ENCODE measurements at regions of chr22 and their contacts with region 1.

Region 1: DNA sequence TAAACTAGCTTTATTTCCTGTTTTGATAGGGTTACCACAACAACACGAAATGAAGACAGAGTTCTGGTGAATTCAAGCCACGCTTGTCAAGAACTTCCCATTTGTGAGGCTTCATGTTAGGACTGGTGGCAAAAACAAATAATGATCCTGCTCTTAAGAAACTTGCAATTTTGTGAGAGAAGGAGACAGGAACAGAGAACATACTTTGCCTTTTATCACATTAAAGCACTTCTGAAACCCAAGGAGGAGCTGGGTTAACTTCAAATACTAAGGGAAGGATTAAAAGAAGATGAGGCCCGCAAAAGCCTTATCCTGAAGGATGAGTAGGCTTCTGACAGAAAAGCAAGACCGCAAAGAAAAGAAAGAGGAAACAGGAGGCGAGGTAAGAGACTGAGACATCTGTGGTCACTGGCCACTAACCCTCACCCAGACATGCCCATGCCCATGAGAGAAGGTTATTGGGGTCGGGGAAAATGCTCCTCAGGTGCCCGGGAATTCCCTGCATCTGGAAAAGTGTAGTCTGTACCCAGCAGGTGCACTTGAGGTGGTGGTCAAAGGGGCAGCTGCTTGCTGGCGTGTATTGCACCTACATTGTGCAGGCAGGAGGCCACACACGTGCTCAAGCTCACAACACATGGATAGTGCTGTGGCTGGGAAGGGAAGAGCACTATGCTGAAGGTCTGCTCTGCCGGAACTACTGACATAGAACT is 50.5 kb downstream of the MAPK1 start:
- DNase-seq: peak in 9 of 14 experiments; percentile 7 to 90 (median 24)
- ATAC-seq: peak; percentile 92
- H3K4me3 ChIP-seq: peak overlapping the region; percentile 8
- H3K4me3 Mint-ChIP-seq: peak overlapping the region; percentile 69
- H3K27ac ChIP-seq: peak overlapping the region; percentile 58 to 92
- H3K27ac Mint-ChIP-seq: peak overlapping the region; percentile 89
- H3K4me1 ChIP-seq: peaks cover 48% of the 10 kb centered on the region
- H3K4me1 Mint-ChIP-seq: peaks cover 68% of the 10 kb centered on the region
- H3K27me3 ChIP-seq: no peaks in the 10 kb centered on the region
- H3K27me3 Mint-ChIP-seq: no peaks in the 10 kb centered on the region
- CTCF ChIP-seq: no peak

Region 2: GRCh38 chr22:21754523-21754922 is 62.4 kb before region 1 on chr22:
- CTCF ChIA-PET with region 1: no interaction called
- POLR2A ChIA-PET with region 1: no interaction called
- intact Hi-C with region 1: no loop called
- DNase-seq: no peak
- ATAC-seq: no peak
- H3K4me3 ChIP-seq: no peak overlapping the region
- H3K4me3 Mint-ChIP-seq: no peak overlapping the region
- H3K27ac ChIP-seq: no peak overlapping the region
- H3K27ac Mint-ChIP-seq: no peak overlapping the region
- H3K4me1 ChIP-seq: no peaks in the 10 kb centered on the region
- H3K4me1 Mint-ChIP-seq: no peaks in the 10 kb centered on the region
- H3K27me3 ChIP-seq: no peaks in the 10 kb centered on the region
- H3K27me3 Mint-ChIP-seq: no peaks in the 10 kb centered on the region
- CTCF ChIP-seq: no peak

Region 3: GRCh38 chr22:21778705-21779363 is 38.1 kb before region 1 on chr22:
- CTCF ChIA-PET with region 1: no interaction called
- POLR2A ChIA-PET with region 1: no interaction called
- intact Hi-C with region 1: no loop called
- DNase-seq: no peak
- ATAC-seq: no peak
- H3K4me3 ChIP-seq: no peak overlapping the region
- H3K4me3 Mint-ChIP-seq: no peak overlapping the region
- H3K27ac ChIP-seq: no peak overlapping the region
- H3K27ac Mint-ChIP-seq: no peak overlapping the region
- H3K4me1 ChIP-seq: no peaks in the 10 kb centered on the region
- H3K4me1 Mint-ChIP-seq: no peaks in the 10 kb centered on the region
- H3K27me3 ChIP-seq: no peaks in the 10 kb centered on the region
- H3K27me3 Mint-ChIP-seq: no peaks in the 10 kb centered on the region
- CTCF ChIP-seq: no peak

Region 4: DNA sequence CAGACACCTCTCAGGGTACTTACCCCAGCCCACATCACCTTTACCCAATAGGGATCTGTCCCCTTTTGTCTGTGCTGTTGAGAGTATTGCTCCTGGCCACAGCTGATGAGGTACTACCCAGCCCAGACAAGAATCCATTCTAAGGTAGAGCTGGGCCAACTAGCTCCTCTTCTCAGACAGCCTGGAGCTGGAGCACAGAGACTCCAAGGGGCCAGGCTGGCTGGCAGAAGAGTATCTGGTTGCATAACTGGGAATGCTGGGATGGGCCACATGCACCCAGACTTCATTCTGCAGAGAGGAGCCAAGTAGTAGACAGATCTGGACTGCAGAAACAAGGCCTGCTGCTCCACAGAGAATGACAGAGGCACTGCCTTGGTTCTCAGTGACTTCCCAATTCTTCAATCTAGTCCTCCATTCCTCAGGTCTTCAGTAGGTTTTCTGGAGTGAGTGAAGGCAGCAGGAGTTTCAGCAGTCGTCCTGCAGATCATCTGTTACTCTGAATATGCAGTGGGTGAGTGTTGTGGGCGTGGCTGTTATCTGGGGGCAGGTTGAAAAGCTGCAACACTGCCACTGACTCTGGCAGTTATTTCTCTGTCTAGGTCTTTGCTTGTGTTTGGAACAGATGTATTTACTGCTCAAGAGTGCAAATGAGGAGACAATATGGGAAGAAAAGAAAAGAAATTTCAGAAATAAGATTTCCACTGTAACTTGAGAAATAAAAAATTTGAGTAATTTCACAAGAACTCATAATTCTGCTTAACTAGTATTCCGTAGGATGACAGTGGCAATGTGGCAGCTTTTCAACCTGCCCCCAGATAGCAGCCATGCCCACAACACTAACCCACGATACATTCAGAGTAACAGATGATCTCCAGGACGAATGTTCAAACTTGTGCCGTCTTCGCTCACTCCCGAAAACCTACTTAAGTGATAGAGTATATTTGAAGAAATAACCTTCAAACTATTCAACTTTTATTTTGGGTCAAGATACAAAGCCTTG is 15.6 kb after region 1 on chr22:
- CTCF ChIA-PET with region 1: interaction called, 3 read pairs
- POLR2A ChIA-PET with region 1: no interaction called
- intact Hi-C with region 1: loop called in 1 of 2 experiments (anchors 2 kb)
- DNase-seq: peak in 2 of 14 experiments; percentile 19 to 24
- ATAC-seq: peak; percentile 32
- H3K4me3 ChIP-seq: no peak overlapping the region
- H3K4me3 Mint-ChIP-seq: peak overlapping the region; percentile 57
- H3K27ac ChIP-seq: no peak overlapping the region
- H3K27ac Mint-ChIP-seq: peak overlapping the region; percentile 66
- H3K4me1 ChIP-seq: peaks cover 24% of the 10 kb centered on the region
- H3K4me1 Mint-ChIP-seq: peaks cover 81% of the 10 kb centered on the region
- H3K27me3 ChIP-seq: no peaks in the 10 kb centered on the region
- H3K27me3 Mint-ChIP-seq: no peaks in the 10 kb centered on the region
- CTCF ChIP-seq: no peak